ENCODE measurements at regions of chr2 and their contacts with region 1.

Region 1: DNA sequence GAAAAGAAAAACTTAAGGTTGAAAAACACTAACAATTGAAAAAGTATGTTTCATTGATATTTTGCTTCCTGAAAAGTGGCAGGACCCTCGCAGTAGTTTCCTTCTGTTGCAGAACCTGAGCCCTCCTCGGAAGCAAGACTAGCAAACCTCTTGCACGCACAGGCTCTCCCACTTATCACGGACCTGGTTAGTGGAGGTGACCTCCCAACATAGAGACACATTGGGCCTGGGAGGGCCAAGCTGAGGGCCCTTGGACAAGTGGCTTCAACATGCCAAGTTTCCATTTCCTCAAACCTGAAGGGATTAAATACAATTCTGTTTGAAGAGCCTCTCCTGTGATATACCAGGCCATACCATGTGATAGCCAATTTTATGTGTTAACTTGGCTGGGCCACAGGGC is 133.4 kb upstream of the AGAP1 start:
- DNase-seq: no peak
- H3K4me3 ChIP-seq: no peak overlapping the region
- H3K27ac ChIP-seq: no peak overlapping the region
- H3K4me1 ChIP-seq: no peaks in the 10 kb centered on the region
- H3K27me3 ChIP-seq: no peaks in the 10 kb centered on the region
- CTCF ChIP-seq: no peak
- POLR2A ChIP-seq: no peak

Region 2: GRCh38 chr2:235594041-235594440 is 233.6 kb after region 1 on chr2:
- intact Hi-C with region 1: no loop called
- DNase-seq: no peak
- H3K4me3 ChIP-seq: no peak overlapping the region
- H3K27ac ChIP-seq: no peak overlapping the region
- H3K4me1 ChIP-seq: peaks cover 3% of the 10 kb centered on the region
- H3K27me3 ChIP-seq: no peaks in the 10 kb centered on the region
- CTCF ChIP-seq: peak in 2 of 3 experiments; percentile 60 to 67
- POLR2A ChIP-seq: no peak

Region 3: GRCh38 chr2:235642446-235643098 is 282.1 kb after region 1 on chr2:
- intact Hi-C with region 1: loop called (anchors 5 kb)
- DNase-seq: no peak
- H3K4me3 ChIP-seq: no peak overlapping the region
- H3K27ac ChIP-seq: no peak overlapping the region
- H3K4me1 ChIP-seq: peaks cover 46% of the 10 kb centered on the region
- H3K27me3 ChIP-seq: no peaks in the 10 kb centered on the region
- CTCF ChIP-seq: no peak
- POLR2A ChIP-seq: no peak